Heart right ventricle (tissue), 16 donors: ENCODE measurements at regions of chr4 and their contacts with region 1.

Region 1: DNA sequence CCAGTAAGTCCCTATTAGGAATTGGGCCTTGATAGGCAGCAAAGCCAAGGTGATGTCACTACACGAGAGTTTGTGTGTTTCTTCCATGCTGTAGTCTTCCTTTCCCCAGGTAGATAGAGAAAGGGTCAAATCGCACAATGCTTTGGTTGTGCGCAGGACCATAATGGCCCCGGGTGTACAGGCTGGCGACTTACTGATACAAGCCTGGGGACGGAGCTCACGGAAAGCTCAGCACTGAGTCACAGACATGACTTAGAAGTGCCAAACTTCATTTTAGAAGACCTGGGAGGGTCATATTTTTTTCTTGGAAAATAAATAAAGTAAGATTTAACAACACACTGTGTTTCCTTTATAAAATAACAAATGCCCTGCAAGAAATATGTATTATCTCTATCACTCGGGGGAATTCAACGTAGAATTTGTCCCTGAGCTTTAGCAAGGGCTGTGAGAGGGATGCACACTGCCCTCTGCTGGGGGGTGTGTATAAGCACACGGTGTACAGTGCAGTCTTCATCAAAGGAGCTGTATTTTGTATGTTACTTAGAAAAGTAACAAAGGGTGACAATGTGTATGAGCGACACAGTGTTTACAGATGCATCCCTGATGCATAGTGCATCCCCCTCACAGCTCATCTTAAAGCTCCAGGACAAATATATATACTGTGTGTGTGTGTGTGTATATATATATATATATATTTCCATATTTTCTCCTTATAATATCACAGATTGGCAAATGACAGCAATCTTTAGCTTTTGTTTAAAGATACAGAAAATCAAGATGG is 254.5 kb upstream of the VEGFC start:
- DNase-seq: peak; percentile 52 to 60
- ATAC-seq: peak; percentile 71 to 92 (median 79)
- H3K4me3 ChIP-seq: no peak overlapping the region
- H3K27ac ChIP-seq: no peak overlapping the region
- H3K4me1 ChIP-seq: peaks cover 0 to 6% (median 0%) of the 10 kb centered on the region in 9 donors
- H3K27me3 ChIP-seq: no peaks in the 10 kb centered on the region
- CTCF ChIP-seq: peak; percentile 74 to 90 (median 85)

Region 2: GRCh38 chr4:176377780-176378179 is 669.5 kb before region 1 on chr4:
- intact Hi-C with region 1: loop called (anchors 2 to 5 kb)
- DNase-seq: no peak
- ATAC-seq: peak in 2 of 8 donors; percentile 21 to 22
- H3K4me3 ChIP-seq: no peak overlapping the region
- H3K27ac ChIP-seq: no peak overlapping the region
- H3K4me1 ChIP-seq: peaks cover 0 to 1% (median 0%) of the 10 kb centered on the region in 9 donors
- H3K27me3 ChIP-seq: no peaks in the 10 kb centered on the region
- CTCF ChIP-seq: peak in 8 of 9 donors; percentile 29 to 72 (median 52)

Region 3: DNA sequence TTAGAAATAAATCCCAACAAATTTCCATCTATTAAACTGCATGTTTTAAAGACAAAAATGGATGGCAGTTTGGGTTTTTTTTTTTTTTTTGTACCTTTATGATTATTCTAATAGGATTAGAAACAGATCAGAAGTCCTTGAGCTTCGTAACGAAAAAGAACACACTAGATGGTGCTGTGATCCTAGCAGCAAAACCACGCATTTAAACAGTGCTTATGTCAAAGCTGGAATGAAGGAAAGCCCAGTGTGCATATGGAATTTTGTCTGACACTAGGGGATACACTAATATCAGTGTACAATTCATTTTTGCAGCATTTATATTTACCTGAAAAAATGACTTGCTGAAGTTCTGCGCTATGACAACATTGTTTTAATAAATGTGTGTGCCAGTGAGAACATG is 483.7 kb before region 1 on chr4:
- intact Hi-C with region 1: loop called in 9 of 10 experiments (anchors 2 to 10 kb)
- DNase-seq: no peak
- ATAC-seq: no peak
- H3K4me3 ChIP-seq: no peak overlapping the region
- H3K27ac ChIP-seq: no peak overlapping the region
- H3K4me1 ChIP-seq: no peaks in the 10 kb centered on the region
- H3K27me3 ChIP-seq: no peaks in the 10 kb centered on the region
- CTCF ChIP-seq: peak in 6 of 9 donors; percentile 21 to 49 (median 42)

Region 4: GRCh38 chr4:176569301-176569700 is 478.0 kb before region 1 on chr4:
- intact Hi-C with region 1: loop called in 8 of 10 experiments (anchors 5 to 10 kb)
- DNase-seq: no peak
- ATAC-seq: no peak
- H3K4me3 ChIP-seq: no peak overlapping the region
- H3K27ac ChIP-seq: no peak overlapping the region
- H3K4me1 ChIP-seq: peaks cover 0 to 11% (median 0%) of the 10 kb centered on the region in 9 donors
- H3K27me3 ChIP-seq: no peaks in the 10 kb centered on the region
- CTCF ChIP-seq: peak in 4 of 9 donors; percentile 6 to 21 (median 15)